Activated B cell treated with CpG ODN at 0.5 μM for 24 hours (primary cell): ENCODE measurements at regions of chr16 and their contacts with region 1.

Region 1: DNA sequence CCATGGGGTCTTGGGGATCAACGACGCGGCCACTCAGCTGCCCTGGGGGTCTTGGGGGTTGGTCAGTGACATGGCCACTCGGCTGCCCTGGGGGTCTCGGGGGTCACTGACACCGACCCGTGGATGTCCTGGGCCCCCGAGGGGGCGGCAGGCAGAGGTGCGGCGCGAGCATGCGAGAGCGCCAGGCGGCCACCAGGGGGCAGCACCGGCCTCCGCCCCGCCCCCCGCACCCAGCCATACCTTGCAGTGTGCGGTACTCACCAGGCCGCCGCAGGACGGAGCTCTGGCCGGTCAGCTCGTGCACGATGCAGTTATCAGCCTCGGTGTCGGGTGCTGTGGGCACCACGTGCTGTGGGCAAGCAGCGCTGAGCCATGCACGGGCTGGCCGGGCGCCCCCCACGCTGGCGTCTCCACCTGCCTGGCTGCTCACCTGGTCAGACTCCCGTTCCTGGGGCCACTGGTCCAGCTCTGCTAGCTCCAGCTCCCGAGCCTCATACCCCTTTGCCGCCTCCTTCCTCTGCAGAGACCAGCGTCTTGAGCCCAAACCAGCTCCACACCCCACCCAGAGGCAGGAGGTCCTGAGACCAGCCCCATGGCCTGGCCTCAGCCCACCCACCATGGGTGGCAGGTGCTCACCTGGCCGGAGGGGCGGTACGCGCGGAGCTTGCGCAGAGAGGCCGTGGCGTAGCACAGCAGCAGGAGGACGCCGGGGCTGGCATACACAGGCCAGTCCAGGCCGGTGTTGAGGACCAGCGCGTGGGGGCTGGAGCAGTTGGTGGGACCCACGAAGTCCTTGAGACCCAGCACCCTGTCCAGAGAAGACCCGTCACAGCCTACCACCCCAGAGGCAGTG is 31.2 kb downstream of the CTU2 start:
- DNase-seq: peak; percentile 77
- ATAC-seq: peak; percentile 97
- H3K4me3 Mint-ChIP-seq: no peak overlapping the region
- H3K27ac Mint-ChIP-seq: no peak overlapping the region
- H3K4me1 Mint-ChIP-seq: peaks cover 6% of the 10 kb centered on the region
- H3K27me3 Mint-ChIP-seq: no peaks in the 10 kb centered on the region
- CTCF ChIP-seq: peak; percentile 95

Region 2: DNA sequence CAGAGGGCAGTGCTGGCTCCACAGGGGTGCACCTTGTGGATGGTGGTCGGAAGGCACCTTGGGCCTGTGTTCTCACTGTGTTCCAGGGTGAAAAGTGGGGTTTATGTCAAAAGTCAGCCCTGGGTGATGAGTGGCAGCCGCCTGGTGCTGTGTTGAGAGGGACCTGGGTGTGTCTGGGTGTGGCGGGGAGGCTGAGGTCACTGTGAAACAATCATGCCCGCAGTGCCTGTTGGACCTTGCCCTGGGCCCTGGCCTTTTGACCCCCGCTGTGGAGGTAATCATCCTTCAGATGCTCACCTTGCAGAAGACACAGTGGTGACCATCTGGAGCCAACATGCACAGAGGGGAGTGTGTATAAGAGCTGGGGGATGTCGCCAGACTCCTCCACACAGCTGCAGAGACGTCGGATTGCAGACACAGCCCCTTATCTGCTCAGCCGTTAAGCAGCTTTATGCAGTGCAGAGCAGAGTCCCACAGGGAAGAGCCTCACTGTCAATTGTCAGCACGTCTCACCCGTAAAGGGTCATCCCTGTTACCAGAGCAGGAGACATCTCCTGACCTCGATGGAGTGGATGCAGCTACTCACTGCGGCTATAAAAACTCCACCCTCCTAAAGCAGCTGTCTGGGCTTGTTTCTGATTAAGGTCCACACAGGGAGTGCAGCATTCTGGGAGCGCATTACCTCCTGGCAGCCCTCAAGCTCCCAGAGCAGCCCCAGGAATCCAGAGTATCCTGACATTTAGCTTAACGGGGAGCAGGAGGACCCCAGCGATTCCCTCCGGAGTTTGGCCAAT is 455.1 kb before region 1 on chr16:
- CTCF ChIA-PET with region 1: no interaction called
- POLR2A ChIA-PET with region 1: no interaction called
- intact Hi-C with region 1: no loop called
- DNase-seq: no peak
- ATAC-seq: no peak
- H3K4me3 Mint-ChIP-seq: no peak overlapping the region
- H3K27ac Mint-ChIP-seq: no peak overlapping the region
- H3K4me1 Mint-ChIP-seq: no peaks in the 10 kb centered on the region
- H3K27me3 Mint-ChIP-seq: peaks cover 4% of the 10 kb centered on the region
- CTCF ChIP-seq: no peak

Region 3: DNA sequence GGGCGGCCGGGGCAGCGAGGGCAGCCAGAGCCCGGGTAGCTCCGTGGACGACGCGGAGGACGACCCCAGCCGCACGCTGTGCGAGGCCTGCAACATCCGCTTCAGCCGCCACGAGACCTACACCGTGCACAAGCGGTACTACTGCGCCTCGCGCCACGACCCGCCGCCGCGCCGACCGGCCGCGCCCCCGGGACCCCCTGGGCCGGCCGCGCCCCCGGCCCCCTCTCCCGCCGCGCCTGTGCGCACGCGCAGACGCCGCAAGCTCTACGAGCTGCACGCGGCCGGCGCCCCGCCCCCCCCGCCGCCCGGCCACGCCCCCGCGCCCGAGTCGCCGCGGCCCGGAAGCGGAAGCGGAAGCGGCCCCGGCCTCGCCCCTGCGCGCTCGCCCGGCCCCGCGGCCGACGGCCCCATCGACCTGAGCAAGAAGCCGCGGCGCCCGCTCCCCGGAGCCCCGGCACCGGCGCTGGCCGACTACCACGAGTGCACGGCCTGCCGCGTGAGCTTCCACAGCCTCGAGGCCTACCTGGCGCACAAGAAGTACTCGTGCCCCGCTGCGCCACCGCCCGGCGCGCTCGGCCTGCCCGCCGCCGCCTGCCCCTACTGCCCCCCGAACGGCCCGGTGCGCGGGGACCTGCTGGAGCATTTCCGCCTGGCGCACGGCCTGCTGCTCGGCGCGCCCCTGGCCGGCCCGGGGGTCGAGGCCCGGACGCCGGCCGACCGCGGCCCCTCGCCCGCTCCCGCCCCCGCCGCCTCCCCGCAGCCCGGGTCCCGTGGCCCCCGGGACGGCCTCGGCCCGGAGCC is 203.4 kb before region 1 on chr16:
- CTCF ChIA-PET with region 1: no interaction called
- POLR2A ChIA-PET with region 1: no interaction called
- intact Hi-C with region 1: no loop called
- DNase-seq: peak; percentile 85
- ATAC-seq: peak; percentile 80
- H3K4me3 Mint-ChIP-seq: no peak overlapping the region
- H3K27ac Mint-ChIP-seq: no peak overlapping the region
- H3K4me1 Mint-ChIP-seq: peaks cover 12% of the 10 kb centered on the region
- H3K27me3 Mint-ChIP-seq: no peaks in the 10 kb centered on the region
- CTCF ChIP-seq: no peak

Region 4: DNA sequence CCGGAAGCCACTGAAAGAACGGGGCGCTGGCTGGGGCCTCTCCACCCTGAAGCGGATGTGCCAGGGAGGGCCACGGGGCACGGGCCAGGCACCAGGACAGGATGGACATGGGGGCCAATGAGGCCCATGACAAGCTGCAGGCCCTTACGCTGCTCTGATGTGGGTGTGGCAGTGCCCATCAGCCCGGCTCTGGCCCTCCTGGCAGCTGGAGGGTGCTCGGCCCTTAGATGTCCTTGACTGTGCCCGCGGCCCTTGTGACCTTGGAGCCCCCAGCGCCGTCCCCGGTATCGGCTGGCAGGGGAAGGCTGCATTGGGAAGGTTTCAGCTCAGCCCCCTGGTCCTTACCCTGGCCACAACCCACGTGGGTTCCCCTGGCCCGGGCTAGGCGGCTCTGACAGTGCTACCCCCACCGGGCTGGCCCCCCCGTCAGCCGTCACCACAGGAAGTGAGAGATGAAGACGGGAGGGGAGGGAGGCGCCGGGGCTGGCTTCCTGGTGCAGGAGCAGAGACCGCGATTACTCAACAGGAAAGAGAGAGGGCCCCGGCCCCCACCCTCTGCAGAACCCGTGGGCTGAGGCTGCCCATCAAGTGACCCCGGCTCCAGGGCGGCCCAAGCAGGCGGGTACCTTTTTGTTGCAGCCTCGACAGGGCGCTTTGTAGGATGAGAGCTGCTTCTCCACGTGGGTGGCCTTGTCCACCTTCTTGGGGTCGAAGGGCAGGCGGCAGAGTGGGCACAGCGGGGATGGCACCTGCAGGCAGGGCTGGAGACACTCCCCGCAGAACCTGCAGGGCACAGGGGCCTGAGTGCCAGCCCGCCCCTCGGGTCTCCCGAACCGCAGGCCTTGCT is 36.7 kb before region 1 on chr16:
- CTCF ChIA-PET with region 1: interaction called, 7 read pairs
- POLR2A ChIA-PET with region 1: no interaction called
- intact Hi-C with region 1: loop called (anchors 5 kb)
- DNase-seq: peak; percentile 86
- ATAC-seq: peak; percentile 81
- H3K4me3 Mint-ChIP-seq: peak overlapping the region; percentile 81
- H3K27ac Mint-ChIP-seq: peak overlapping the region; percentile 90
- H3K4me1 Mint-ChIP-seq: peaks cover 73% of the 10 kb centered on the region
- H3K27me3 Mint-ChIP-seq: no peaks in the 10 kb centered on the region
- CTCF ChIP-seq: no peak

Region 5: GRCh38 chr16:88770461-88771293 is 33.2 kb after region 1 on chr16:
- CTCF ChIA-PET with region 1: interaction called, 11 read pairs
- POLR2A ChIA-PET with region 1: no interaction called
- intact Hi-C with region 1: no loop called
- DNase-seq: peak; percentile 43
- ATAC-seq: peak; percentile 54
- H3K4me3 Mint-ChIP-seq: peak overlapping the region; percentile 19
- H3K27ac Mint-ChIP-seq: peak overlapping the region; percentile 35
- H3K4me1 Mint-ChIP-seq: peaks cover 61% of the 10 kb centered on the region
- H3K27me3 Mint-ChIP-seq: no peaks in the 10 kb centered on the region
- CTCF ChIP-seq: no peak

Region 6: DNA sequence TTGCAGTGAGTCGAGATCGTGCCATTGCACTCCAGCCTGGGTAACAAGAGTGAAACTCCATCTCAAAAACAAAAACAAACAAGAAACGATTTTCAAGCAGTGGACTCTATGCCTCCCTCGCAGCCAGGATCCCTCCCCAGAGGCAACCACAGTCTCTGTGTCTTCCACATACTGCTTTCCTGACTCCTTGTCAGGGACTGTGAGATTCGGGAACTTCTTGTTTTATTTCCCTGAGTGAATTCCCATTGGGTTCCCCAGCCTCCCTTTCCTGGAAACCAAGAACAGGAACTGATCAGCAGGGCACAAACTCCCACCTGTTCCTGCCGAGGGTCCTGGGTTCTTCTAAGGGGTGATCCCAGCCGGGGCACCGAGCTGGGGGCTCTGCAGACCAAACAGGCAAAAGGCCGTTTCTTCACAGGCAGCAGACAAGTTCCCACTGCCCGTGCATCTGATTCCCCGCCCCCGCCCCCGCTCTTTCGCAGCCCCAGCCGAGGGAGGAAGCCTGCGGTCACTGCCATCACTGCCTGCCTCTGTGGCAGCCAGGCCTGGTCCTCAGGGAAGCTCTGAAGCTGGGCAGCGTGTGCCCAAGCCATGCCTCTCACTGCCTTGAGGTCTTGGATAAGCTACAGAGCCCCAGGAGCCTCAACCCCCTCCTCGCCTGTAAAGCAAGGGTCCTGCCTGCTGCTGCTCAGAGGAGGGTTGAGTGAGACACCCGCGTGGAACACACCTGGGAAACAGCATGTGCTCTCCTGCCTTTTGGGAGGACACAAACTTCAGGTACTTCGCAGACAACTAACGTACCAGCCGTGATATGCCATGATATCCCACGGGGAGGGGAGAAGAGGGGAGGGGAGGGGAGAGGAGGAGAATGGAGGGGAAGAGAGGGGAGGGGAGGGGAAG is 53.0 kb after region 1 on chr16:
- CTCF ChIA-PET with region 1: interaction called, 56 read pairs
- POLR2A ChIA-PET with region 1: interaction called, 31 read pairs
- intact Hi-C with region 1: loop called (anchors 1 kb)
- DNase-seq: peak; percentile 34
- ATAC-seq: peak; percentile 71
- H3K4me3 Mint-ChIP-seq: peak overlapping the region; percentile 55
- H3K27ac Mint-ChIP-seq: peak overlapping the region; percentile 79
- H3K4me1 Mint-ChIP-seq: peaks cover 52% of the 10 kb centered on the region
- H3K27me3 Mint-ChIP-seq: no peaks in the 10 kb centered on the region
- CTCF ChIP-seq: no peak

Region 7: GRCh38 chr16:88811769-88812512 is 74.4 kb after region 1 on chr16 and contains the start of gene APRT:
- CTCF ChIA-PET with region 1: interaction called, 14 read pairs
- POLR2A ChIA-PET with region 1: interaction called, 16 read pairs
- intact Hi-C with region 1: no loop called
- DNase-seq: peak; percentile 99
- ATAC-seq: peak; percentile 86
- H3K4me3 Mint-ChIP-seq: peak within 1 kb of the TSS; percentile 91
- H3K27ac Mint-ChIP-seq: peak within 1 kb of the TSS; percentile 97
- H3K4me1 Mint-ChIP-seq: peaks cover 17% of the 10 kb centered on the region
- H3K27me3 Mint-ChIP-seq: no peaks in the 10 kb centered on the region
- CTCF ChIP-seq: no peak
- total RNA-seq, gene APRT: 198 and 209 TPM in 2 replicates

Region 8: DNA sequence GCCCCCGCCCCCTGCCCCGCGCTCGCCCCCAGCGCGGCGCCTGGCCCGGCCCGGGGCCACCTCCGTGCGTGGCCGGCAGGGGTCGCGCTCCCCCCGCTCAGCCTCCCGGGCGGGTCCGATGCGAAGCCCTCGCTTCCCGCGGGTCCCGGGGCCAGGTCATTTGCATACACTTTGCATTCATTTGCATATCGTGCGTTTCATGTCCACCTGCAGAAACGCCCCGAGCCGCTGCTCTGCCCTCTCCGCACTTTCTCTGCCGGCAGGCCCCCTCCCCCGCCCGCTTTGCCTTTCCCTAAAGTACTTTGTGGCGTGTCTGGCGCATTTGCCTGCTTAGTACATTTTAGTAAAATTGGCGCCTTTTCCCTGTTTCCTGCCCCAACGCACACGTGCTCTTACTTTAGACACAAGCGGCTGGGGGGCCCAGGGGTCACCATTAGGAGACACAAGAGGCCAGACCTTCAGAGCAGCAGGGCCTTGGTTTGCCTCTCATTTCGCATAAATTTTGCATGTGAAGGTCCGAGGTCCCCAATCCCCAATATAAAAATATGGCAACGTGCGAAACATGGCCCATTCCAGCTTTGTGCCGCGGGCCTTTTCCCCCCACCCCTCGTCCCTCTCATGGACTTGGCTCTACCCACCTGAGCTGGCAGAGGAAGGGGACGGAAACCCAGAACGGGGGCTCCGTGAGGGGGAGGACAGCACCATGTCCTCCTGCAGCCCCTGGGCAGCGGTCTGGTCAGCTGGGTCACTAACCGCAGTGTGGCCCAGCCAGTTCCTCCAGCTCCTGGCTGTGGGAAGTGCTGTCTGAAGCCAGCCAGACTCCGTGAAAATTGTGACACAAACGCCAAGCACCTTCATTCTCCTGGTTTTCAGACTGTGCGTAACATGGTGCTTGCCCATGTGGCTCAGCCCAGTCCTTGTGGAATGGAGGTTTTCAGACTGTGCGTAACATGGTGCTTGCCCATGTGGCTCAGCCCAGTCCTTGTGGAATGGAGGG is 204.7 kb after region 1 on chr16:
- CTCF ChIA-PET with region 1: interaction called, 4 read pairs
- POLR2A ChIA-PET with region 1: no interaction called
- intact Hi-C with region 1: loop called (anchors 5 kb)
- DNase-seq: peak; percentile 77
- ATAC-seq: peak; percentile 67
- H3K4me3 Mint-ChIP-seq: peak overlapping the region; percentile 79
- H3K27ac Mint-ChIP-seq: peak overlapping the region; percentile 66
- H3K4me1 Mint-ChIP-seq: peaks cover 46% of the 10 kb centered on the region
- H3K27me3 Mint-ChIP-seq: no peaks in the 10 kb centered on the region
- CTCF ChIP-seq: peak; percentile 54

Region 9: DNA sequence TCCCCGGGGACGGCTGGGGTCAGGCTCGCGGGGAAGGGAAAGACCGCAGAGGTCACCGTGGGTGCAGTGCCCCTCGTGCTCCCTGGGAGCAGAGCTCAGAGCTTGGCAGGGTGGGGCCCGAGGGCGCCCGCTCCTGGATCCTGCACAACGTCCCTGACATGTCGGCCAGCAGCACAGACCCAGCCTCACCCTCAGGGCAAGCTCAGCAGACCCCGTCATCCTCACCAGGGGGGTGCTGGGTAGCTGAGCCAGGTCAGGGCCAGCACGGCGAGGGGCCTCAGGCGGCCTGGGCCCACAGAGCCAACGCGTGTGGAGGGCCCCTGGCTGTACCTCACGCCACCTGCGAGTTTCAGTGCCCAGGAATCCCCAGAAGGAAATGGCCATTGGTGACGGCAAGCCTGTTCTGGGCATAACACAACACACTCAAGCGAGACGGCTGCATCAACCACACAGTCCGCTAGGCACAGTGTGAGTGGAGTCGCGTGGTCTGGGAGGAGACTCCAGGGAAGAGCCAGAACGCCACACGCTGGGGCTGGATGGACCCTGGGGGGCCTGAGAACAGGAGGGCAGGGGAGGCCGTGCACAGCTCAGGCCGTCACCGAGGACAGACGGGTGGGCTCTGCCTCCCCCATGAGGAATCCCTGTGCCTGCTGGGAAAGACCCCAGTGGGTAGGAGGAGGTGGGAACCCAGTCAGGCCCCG is 540.3 kb after region 1 on chr16:
- CTCF ChIA-PET with region 1: no interaction called
- POLR2A ChIA-PET with region 1: no interaction called
- intact Hi-C with region 1: no loop called
- DNase-seq: no peak
- ATAC-seq: no peak
- H3K4me3 Mint-ChIP-seq: no peak overlapping the region
- H3K27ac Mint-ChIP-seq: no peak overlapping the region
- H3K4me1 Mint-ChIP-seq: no peaks in the 10 kb centered on the region
- H3K27me3 Mint-ChIP-seq: no peaks in the 10 kb centered on the region
- CTCF ChIP-seq: no peak